CD8-positive, alpha-beta T cell (primary cell): ENCODE measurements at regions of chr12 and their contacts with region 1.

Region 1: GRCh38 chr12:57182921-57183790 is 33.4 kb upstream of the NXPH4 start:
- DNase-seq: peak; percentile 63 to 88 (median 82)
- ATAC-seq: peak; percentile 100
- H3K4me3 ChIP-seq: no peak overlapping the region
- H3K4me3 Mint-ChIP-seq: no peak overlapping the region
- H3K27ac ChIP-seq: no peak overlapping the region
- H3K27ac Mint-ChIP-seq: no peak overlapping the region
- H3K4me1 ChIP-seq: peaks cover 5% of the 10 kb centered on the region
- H3K4me1 Mint-ChIP-seq: peaks cover 2% of the 10 kb centered on the region
- H3K27me3 ChIP-seq: no peaks in the 10 kb centered on the region
- H3K27me3 Mint-ChIP-seq: no peaks in the 10 kb centered on the region
- CTCF ChIP-seq: peak; percentile 83

Region 2: DNA sequence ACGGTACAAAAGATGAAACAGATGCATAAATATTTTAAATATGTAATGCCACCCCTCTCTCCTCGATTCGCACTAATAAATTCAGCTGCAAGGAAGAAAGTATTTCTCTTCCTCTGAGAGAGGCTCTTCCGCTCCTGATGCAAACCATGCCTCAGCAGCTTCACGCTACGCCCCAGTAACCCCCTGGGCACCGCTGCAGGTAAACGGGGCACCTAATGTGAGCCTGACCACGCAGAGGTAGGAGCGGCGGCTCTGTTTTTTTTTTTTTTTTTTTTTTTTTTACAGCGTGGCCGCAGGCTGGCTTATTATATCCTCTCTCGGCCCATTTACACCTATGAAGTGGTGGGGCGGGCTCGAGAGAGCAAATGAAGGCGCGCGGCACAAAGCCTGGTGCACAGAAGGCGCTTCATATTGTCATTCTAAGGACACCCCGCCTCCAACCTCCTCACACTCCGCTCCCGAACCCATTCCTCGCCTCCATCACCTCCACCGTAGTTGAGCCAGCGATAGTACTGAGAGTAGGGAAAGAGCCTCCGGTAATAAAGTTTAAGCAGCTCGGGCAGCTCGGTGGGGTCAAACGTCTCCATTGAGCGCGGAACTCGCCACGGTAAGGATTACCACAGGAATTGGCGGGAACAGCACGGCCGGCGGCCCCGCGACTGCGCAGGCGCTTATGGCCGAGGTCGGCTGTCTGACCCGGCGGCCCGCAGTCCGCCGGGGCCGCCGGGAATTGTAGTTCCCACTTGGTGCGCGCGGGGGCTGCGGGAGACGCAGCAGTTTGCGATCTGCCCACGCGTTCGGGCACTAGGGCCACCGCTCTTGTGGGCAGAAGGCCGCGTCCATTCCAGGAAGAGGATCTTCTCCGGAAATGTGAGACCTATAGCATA is 431.2 kb before region 1 on chr12 and contains the start of gene PRIM1:
- CTCF ChIA-PET with region 1: no interaction called
- POLR2A ChIA-PET with region 1: no interaction called
- intact Hi-C with region 1: loop called (anchors 2 kb)
- DNase-seq: peak; percentile 58 to 89 (median 81)
- ATAC-seq: peak; percentile 81
- H3K4me3 ChIP-seq: peak within 1 kb of the TSS; percentile 91 to 99
- H3K4me3 Mint-ChIP-seq: peak within 1 kb of the TSS; percentile 97
- H3K27ac ChIP-seq: peak within 1 kb of the TSS; percentile 71 to 76
- H3K27ac Mint-ChIP-seq: peak within 1 kb of the TSS; percentile 86
- H3K4me1 ChIP-seq: peaks cover 11% of the 10 kb centered on the region
- H3K4me1 Mint-ChIP-seq: peaks cover 22% of the 10 kb centered on the region
- H3K27me3 ChIP-seq: no peaks in the 10 kb centered on the region
- H3K27me3 Mint-ChIP-seq: no peaks in the 10 kb centered on the region
- CTCF ChIP-seq: peak; percentile 23
- total RNA-seq, gene PRIM1: 5.0 to 5.8 TPM

Region 3: GRCh38 chr12:57012600-57013465 is 170.3 kb before region 1 on chr12:
- CTCF ChIA-PET with region 1: no interaction called
- POLR2A ChIA-PET with region 1: no interaction called
- intact Hi-C with region 1: loop called (anchors 1 to 2 kb)
- DNase-seq: no peak
- ATAC-seq: no peak
- H3K4me3 ChIP-seq: no peak overlapping the region
- H3K4me3 Mint-ChIP-seq: no peak overlapping the region
- H3K27ac ChIP-seq: no peak overlapping the region
- H3K27ac Mint-ChIP-seq: no peak overlapping the region
- H3K4me1 ChIP-seq: peaks cover 14% of the 10 kb centered on the region
- H3K4me1 Mint-ChIP-seq: peaks cover 16% of the 10 kb centered on the region
- H3K27me3 ChIP-seq: peaks cover 0 to 3% of the 10 kb centered on the region in 2 experiments
- H3K27me3 Mint-ChIP-seq: peaks cover 4% of the 10 kb centered on the region
- CTCF ChIP-seq: no peak

Region 4: GRCh38 chr12:57213058-57213715 is 30.0 kb after region 1 on chr12:
- CTCF ChIA-PET with region 1: interaction called, 15 read pairs
- POLR2A ChIA-PET with region 1: no interaction called
- intact Hi-C with region 1: no loop called
- DNase-seq: peak; percentile 70 to 90 (median 84)
- ATAC-seq: peak; percentile 66
- H3K4me3 ChIP-seq: no peak overlapping the region
- H3K4me3 Mint-ChIP-seq: peak overlapping the region; percentile 8
- H3K27ac ChIP-seq: no peak overlapping the region
- H3K27ac Mint-ChIP-seq: no peak overlapping the region
- H3K4me1 ChIP-seq: peaks cover 43% of the 10 kb centered on the region
- H3K4me1 Mint-ChIP-seq: peaks cover 34% of the 10 kb centered on the region
- H3K27me3 ChIP-seq: peaks cover 37 to 42% of the 10 kb centered on the region in 2 experiments
- H3K27me3 Mint-ChIP-seq: peaks cover 39% of the 10 kb centered on the region
- CTCF ChIP-seq: peak; percentile 97